Activated CD4-positive, alpha-beta T cell treated with anti-CD3 and anti-CD28 coated beads, Interleukin-2, amount 10 ng/mL, durations not matched to agents 7 days and 5 days (primary cell): ENCODE measurements at regions of chr18 and their contacts with region 1.

Region 1: GRCh38 chr18:58671111-58671631 is at the start of gene MALT1:
- DNase-seq: peak; percentile 94
- H3K4me3 Mint-ChIP-seq: peak within 1 kb of the TSS; percentile 96
- H3K27ac Mint-ChIP-seq: peak within 1 kb of the TSS; percentile 97
- H3K4me1 Mint-ChIP-seq: peaks cover 64% of the 10 kb centered on the region
- H3K27me3 Mint-ChIP-seq: peaks cover 2% of the 10 kb centered on the region
- total RNA-seq, gene MALT1: 52.1 to 57.0 TPM

Region 2: GRCh38 chr18:58653814-58654509 is 17.2 kb before region 1 on chr18:
- CTCF ChIA-PET with region 1: interaction called, 44 read pairs
- POLR2A ChIA-PET with region 1: no interaction called
- DNase-seq: no peak
- H3K4me3 Mint-ChIP-seq: no peak overlapping the region
- H3K27ac Mint-ChIP-seq: peak overlapping the region; percentile 44
- H3K4me1 Mint-ChIP-seq: peaks cover 86% of the 10 kb centered on the region
- H3K27me3 Mint-ChIP-seq: no peaks in the 10 kb centered on the region

Region 3: DNA sequence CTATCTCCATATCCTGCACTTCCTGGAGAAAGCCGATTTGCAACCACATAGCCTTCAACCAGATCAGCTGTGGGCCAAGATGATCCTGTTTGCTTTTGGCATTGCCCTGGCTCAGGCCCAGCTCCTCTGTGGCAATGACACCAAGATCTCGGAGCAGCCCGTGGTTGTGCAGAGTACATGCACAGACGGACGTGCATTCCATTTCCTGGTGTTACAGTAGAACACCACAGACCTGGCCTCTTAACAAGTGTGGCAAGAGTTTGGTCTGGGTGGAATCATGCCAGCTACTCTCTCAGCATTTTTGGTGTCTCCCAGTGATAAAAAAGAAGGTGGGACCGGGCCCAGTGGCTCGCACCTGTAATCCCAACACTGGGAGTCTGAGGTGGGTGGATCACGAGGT is 20.1 kb after region 1 on chr18:
- CTCF ChIA-PET with region 1: interaction called, 11 read pairs
- POLR2A ChIA-PET with region 1: interaction called, 5 read pairs
- DNase-seq: no peak
- H3K4me3 Mint-ChIP-seq: no peak overlapping the region
- H3K27ac Mint-ChIP-seq: peak overlapping the region; percentile 28
- H3K4me1 Mint-ChIP-seq: peaks cover 93% of the 10 kb centered on the region
- H3K27me3 Mint-ChIP-seq: no peaks in the 10 kb centered on the region

Region 4: GRCh38 chr18:58776084-58776483 is 104.9 kb after region 1 on chr18:
- CTCF ChIA-PET with region 1: no interaction called
- POLR2A ChIA-PET with region 1: no interaction called
- DNase-seq: no peak
- H3K4me3 Mint-ChIP-seq: no peak overlapping the region
- H3K27ac Mint-ChIP-seq: no peak overlapping the region
- H3K4me1 Mint-ChIP-seq: peaks cover 5% of the 10 kb centered on the region
- H3K27me3 Mint-ChIP-seq: peaks cover 14% of the 10 kb centered on the region